T-cell (primary cell): ENCODE measurements at regions of chr11 and their contacts with region 1.

Region 1: DNA sequence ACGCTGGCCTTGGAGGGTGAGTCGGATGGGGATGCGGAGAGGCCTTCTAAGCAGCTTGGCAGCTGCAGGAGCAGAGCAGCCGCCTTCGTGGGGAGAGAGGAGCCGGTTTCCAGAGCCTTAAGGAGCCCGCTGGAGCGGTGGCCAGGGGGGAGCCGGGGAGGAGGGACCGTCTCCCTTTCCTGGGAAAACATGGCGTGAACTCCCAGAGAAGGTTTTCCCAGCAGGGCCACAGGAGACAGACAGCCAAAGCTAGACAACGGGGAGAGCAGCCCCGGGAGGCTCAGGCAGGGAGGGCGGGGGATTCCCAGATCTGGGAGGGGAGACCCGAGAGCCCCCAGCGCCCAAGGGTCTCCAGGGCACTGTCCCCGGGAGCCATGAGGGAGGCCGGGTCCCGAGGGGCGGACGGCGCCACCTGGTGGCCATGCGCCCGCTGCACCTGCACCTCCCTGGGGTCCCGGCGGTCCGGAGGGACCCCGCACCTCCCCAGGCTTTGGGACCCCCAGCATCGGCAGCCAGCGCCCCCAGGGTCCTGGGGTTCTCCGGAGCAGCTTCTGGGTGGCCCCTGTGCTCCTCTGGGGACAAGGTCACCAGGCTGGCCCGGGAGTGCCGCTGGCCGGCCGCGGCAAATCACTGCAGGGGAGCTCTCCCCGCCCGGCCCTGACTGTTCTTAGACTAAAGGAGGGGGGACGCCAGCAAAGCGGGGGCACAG is 2.4 kb upstream of the SYT8 start:
- DNase-seq: peak in 29 of 35 experiments; percentile 33 to 82 (median 61)
- ATAC-seq: peak; percentile 69 to 94 (median 74)
- H3K4me3 ChIP-seq: no peak overlapping the region
- H3K4me3 Mint-ChIP-seq: no peak overlapping the region
- H3K27ac ChIP-seq: no peak overlapping the region
- H3K27ac Mint-ChIP-seq: peak overlapping the region in 1 of 2 donors; percentile 52
- H3K4me1 ChIP-seq: peaks cover 0 to 10% of the 10 kb centered on the region in 2 experiments
- H3K4me1 Mint-ChIP-seq: peaks cover 0 to 2% (median 1%) of the 10 kb centered on the region in 3 donors
- H3K27me3 ChIP-seq: peaks cover 0 to 77% of the 10 kb centered on the region in 2 experiments
- H3K27me3 Mint-ChIP-seq: peaks cover 0 to 26% of the 10 kb centered on the region in 2 donors

Region 2: DNA sequence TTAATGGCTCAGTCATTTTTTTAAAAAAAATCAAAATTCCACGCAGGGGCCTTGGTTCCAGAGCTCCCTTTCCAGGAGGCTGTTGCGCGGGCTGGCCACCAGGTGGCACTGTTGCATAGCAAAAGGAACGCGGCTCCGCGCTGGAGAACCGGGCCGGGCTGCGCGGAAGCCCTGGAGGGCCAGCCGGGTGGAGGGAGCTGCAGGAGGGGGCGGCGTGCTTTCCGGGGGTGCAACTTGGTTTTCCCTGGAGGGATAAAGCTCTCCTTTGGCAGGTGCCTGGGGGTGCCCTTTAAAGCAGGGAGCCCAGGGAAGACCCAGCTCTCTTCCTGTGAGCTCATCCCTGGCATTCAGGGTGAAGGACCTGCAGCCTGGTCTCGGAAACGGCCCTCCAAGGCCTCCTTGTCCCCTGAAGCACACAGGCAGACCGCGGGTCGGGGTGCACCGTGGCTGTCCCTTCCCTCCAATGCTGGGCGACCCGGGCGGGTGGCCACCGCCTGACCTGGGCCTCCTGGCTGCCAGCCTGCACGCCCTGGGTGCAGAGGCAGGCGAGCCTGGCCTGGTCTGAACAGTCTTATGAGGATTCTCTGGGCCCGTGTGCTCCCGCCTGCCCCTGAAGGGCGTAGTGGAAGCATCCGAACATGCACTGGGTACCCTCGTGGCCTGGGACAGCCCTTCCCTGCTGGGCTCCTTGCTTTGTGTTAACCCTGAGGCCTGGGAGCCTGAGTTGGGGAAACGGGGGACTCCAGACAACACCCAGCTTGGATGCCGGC is 179.4 kb before region 1 on chr11:
- CTCF ChIA-PET with region 1: interaction called, 10 to 15 read pairs
- POLR2A ChIA-PET with region 1: no interaction called
- DNase-seq: peak; percentile 34 to 84 (median 69)
- ATAC-seq: peak; percentile 84 to 92 (median 87)
- H3K4me3 ChIP-seq: no peak overlapping the region
- H3K4me3 Mint-ChIP-seq: no peak overlapping the region
- H3K27ac ChIP-seq: no peak overlapping the region
- H3K27ac Mint-ChIP-seq: no peak overlapping the region
- H3K4me1 ChIP-seq: peaks cover 0 to 4% of the 10 kb centered on the region in 2 experiments
- H3K4me1 Mint-ChIP-seq: no peaks in the 10 kb centered on the region
- H3K27me3 ChIP-seq: peaks cover 0 to 64% of the 10 kb centered on the region in 2 experiments
- H3K27me3 Mint-ChIP-seq: peaks cover 7 to 33% of the 10 kb centered on the region in 2 donors

Region 3: DNA sequence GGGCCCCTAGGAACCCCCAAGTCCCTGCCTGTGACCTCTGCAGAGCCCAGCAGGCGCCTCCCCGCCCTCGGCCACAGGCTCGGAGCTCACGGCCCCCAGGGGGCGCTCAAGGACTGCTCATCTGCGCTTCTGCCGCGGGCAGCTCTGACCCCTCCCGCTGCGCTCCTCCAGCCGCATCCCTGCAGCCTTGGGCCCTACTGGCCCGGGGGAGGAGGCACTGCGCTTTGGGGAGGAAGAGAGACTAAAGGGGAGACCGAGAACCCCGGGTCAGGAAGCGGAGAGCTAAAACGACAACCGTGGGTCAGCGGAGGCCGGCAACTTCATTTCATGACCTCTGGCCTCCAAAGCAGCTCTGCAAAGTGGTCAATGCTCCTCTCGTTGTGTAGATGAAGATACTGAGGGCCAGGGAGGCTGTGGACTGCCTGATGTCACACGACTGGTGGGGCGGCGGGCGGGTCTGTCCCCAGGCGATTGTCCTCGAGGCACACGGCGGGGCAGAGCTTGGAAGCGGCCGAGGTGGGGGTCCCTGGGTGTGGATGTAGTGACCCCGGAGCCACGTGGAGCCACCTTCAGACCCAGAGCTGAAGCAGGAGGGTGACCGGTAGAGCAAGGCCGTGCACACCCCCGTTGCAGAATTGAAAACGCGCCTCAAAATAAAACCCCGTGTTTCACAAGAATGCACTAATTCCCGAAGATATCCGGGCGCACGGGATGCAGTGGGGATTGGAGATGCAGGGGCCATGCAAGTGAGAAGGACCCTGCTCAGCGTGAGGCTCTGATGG is 138.1 kb before region 1 on chr11:
- CTCF ChIA-PET with region 1: interaction called, 63 to 70 read pairs
- POLR2A ChIA-PET with region 1: no interaction called
- DNase-seq: peak; percentile 30 to 89 (median 69)
- ATAC-seq: peak; percentile 81 to 88 (median 85)
- H3K4me3 ChIP-seq: peak overlapping the region in 1 of 2 donors; percentile 34
- H3K4me3 Mint-ChIP-seq: peak overlapping the region in 1 of 3 donors; percentile 24
- H3K27ac ChIP-seq: no peak overlapping the region
- H3K27ac Mint-ChIP-seq: no peak overlapping the region
- H3K4me1 ChIP-seq: peaks cover 0 to 31% of the 10 kb centered on the region in 2 experiments
- H3K4me1 Mint-ChIP-seq: peaks cover 4 to 11% (median 9%) of the 10 kb centered on the region in 3 donors
- H3K27me3 ChIP-seq: peaks cover 0 to 68% of the 10 kb centered on the region in 2 experiments
- H3K27me3 Mint-ChIP-seq: peaks cover 8 to 40% of the 10 kb centered on the region in 2 donors

Region 4: DNA sequence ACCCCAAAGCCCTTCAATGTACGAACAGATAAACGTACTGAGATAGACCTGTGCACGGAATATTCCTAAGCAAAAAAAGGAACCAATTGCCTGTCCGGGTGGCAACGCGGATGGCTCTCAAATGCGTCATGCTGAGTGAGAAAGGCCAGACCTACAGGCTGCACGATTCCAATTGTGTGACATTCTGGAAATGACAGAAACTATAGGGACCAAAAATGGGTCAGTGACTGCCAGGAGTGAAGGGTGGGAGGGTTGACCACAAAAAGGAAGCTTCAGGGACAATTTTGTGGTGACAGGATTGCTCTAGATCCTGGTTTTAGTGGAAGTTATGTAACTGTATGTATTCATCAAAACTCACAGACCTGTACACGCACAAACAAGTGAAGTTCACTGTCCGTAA is 21.6 kb before region 1 on chr11:
- CTCF ChIA-PET with region 1: no interaction called
- POLR2A ChIA-PET with region 1: interaction called in 1 of 2 experiments, 11 read pairs
- DNase-seq: no peak
- ATAC-seq: no peak
- H3K4me3 ChIP-seq: no peak overlapping the region
- H3K4me3 Mint-ChIP-seq: no peak overlapping the region
- H3K27ac ChIP-seq: no peak overlapping the region
- H3K27ac Mint-ChIP-seq: no peak overlapping the region
- H3K4me1 ChIP-seq: no peaks in the 10 kb centered on the region
- H3K4me1 Mint-ChIP-seq: no peaks in the 10 kb centered on the region
- H3K27me3 ChIP-seq: peaks cover 5 to 21% of the 10 kb centered on the region in 2 experiments
- H3K27me3 Mint-ChIP-seq: peaks cover 8 to 11% of the 10 kb centered on the region in 2 donors

Region 5: DNA sequence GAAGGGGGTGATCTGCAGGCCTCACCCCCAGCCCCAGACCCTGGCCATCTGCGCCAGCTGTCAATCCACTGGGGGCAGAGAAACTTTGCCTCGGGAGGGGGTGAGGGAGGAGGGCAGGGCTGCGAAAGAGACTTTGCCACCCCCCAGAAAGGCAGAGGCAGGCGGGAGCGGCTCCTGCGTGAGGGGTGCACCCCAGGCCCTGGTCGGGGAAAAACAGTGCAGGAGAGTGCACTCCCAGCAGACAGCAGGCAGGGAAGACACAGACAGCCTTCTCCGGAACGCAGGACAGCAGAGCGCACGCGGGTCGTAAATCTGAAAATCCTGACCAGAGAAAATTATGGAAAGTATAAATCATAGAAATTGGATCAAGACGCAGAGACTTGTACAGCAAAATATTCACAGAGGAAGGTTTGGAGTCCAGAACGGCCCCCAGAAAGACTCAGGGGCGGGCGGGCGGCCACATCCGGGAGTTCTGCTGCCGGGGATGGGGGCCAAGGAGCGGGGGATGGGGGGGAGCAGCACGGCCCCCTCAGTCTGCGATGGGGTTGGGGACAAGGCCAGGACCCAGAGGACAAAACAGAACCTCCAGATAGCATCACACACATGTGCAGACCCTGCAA is 106.8 kb after region 1 on chr11:
- CTCF ChIA-PET with region 1: no interaction called
- POLR2A ChIA-PET with region 1: no interaction called
- DNase-seq: peak in 5 of 35 experiments; percentile 2 to 26 (median 9)
- ATAC-seq: peak in 3 of 4 experiments; percentile 45 to 60 (median 50)
- H3K4me3 ChIP-seq: no peak overlapping the region
- H3K4me3 Mint-ChIP-seq: peak overlapping the region in 1 of 3 donors; percentile 53
- H3K27ac ChIP-seq: no peak overlapping the region
- H3K27ac Mint-ChIP-seq: peak overlapping the region in 1 of 2 donors; percentile 55
- H3K4me1 ChIP-seq: peaks cover 0 to 8% of the 10 kb centered on the region in 2 experiments
- H3K4me1 Mint-ChIP-seq: peaks cover 5 to 11% (median 6%) of the 10 kb centered on the region in 3 donors
- H3K27me3 ChIP-seq: peaks cover 0 to 16% of the 10 kb centered on the region in 2 experiments
- H3K27me3 Mint-ChIP-seq: peaks cover 0 to 2% of the 10 kb centered on the region in 2 donors

Region 6: GRCh38 chr11:1988667-1989317 is 156.4 kb after region 1 on chr11:
- CTCF ChIA-PET with region 1: interaction called in 1 of 2 experiments, 10 read pairs
- POLR2A ChIA-PET with region 1: no interaction called
- DNase-seq: no peak
- ATAC-seq: no peak
- H3K4me3 ChIP-seq: no peak overlapping the region
- H3K4me3 Mint-ChIP-seq: no peak overlapping the region
- H3K27ac ChIP-seq: no peak overlapping the region
- H3K27ac Mint-ChIP-seq: no peak overlapping the region
- H3K4me1 ChIP-seq: no peaks in the 10 kb centered on the region
- H3K4me1 Mint-ChIP-seq: no peaks in the 10 kb centered on the region
- H3K27me3 ChIP-seq: no peaks in the 10 kb centered on the region
- H3K27me3 Mint-ChIP-seq: no peaks in the 10 kb centered on the region